B cell (primary cell): ENCODE measurements at regions of chr12 and their contacts with region 1.

Region 1: DNA sequence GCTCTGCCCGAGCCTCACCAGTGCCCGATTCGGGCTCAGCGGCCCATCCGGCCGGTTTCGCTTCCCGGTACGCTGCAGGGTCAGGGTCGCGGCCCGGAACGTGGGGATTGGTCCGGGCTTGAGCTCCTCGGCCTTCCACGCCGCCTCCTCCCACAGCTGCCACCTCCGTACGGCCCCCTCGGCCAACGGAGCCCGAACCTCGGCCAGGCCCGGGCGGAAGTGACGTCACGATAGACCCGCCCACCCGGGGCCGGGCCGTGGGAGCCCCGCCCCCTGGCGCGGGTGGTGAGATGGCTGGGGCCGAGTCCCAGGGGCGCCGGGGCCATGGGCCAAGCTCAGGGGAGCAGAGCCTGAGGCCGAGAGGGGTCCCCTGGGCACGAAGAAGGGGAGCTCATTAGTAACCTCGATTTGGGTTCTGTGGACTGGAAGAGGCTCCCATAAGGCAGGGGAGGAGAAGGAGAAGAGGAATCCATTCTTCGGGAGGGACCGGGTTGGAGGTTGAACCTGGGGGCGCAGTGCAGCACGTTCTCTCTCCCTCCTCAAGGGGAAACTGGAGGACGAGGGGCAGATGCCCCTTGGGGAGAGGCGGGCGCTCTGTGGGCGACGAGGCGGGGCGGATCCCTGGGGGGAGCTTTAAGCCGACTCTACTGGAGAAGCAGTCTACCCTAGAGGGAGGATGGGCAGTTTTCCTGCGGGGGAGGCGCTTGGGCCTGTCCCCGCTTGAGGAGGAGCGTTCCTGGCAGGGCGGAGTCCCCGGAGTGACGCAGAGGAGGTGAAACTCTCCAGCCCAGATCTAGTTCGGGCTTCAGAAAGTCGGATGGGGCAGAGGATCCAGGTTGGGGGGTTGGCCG is at the start of gene MLF2:
- DNase-seq: peak; percentile 98
- ATAC-seq: peak; percentile 87
- H3K4me3 ChIP-seq: peak within 1 kb of the TSS; percentile 75 to 93 (median 79)
- H3K4me3 Mint-ChIP-seq: peak within 1 kb of the TSS; percentile 96
- H3K27ac ChIP-seq: peak within 1 kb of the TSS; percentile 93 to 96
- H3K27ac Mint-ChIP-seq: peak within 1 kb of the TSS; percentile 99
- H3K4me1 ChIP-seq: peaks cover 13 to 14% of the 10 kb centered on the region in 2 donors
- H3K4me1 Mint-ChIP-seq: peaks cover 17% of the 10 kb centered on the region
- H3K27me3 ChIP-seq: no peaks in the 10 kb centered on the region
- H3K27me3 Mint-ChIP-seq: peaks cover 4% of the 10 kb centered on the region
- CTCF ChIP-seq: peak; percentile 89
- total RNA-seq, gene MLF2: 97.2 and 106 TPM in 2 replicates

Region 2: GRCh38 chr12:5758347-5758746 is 994.8 kb before region 1 on chr12:
- CTCF ChIA-PET with region 1: no interaction called
- POLR2A ChIA-PET with region 1: no interaction called
- intact Hi-C with region 1: no loop called
- DNase-seq: no peak
- ATAC-seq: no peak
- H3K4me3 ChIP-seq: no peak overlapping the region
- H3K4me3 Mint-ChIP-seq: no peak overlapping the region
- H3K27ac ChIP-seq: no peak overlapping the region
- H3K27ac Mint-ChIP-seq: no peak overlapping the region
- H3K4me1 ChIP-seq: no peaks in the 10 kb centered on the region
- H3K4me1 Mint-ChIP-seq: no peaks in the 10 kb centered on the region
- H3K27me3 ChIP-seq: peaks cover 0 to 6% (median 0%) of the 10 kb centered on the region in 4 experiments
- H3K27me3 Mint-ChIP-seq: peaks cover 21% of the 10 kb centered on the region
- CTCF ChIP-seq: no peak

Region 3: DNA sequence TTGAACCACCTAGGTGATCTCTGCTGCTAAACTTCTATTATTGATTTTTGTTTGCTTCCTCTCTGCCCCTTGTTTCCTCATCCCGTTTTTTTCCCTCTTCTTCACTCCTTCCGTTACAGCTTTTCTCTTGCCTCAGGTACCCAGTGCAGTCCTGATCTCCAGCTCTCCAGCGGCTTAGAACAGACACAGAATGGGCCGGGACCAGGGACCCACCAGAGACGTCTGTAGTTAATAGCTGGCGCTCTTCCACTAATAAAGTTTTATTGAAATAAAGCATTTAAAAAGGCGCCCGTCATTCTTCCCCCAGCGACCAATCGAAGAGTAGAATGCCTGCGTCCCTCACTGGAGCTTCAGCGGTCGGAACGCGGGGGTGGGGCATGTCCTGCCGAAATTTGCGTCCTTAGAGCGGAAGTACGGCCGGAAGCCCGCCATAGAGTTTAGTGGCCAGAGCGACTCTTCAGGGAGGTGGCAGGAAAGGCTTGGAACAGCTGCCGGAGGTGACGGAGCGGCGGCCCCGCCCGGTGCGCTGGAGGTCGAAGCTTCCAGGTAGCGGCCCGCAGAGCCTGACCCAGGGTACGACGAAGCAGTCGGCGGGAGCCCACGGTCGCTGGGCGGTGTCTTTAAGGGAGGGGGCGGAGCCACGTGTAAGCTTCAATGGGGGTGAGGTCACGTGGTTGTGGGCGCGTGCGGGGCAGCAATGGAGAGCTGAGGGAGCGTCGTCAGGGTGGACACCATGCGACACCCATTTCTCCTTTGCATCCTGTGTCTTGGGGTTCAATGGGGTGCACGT is 29.3 kb before region 1 on chr12 and contains the start of gene COPS7A:
- CTCF ChIA-PET with region 1: interaction called, 22 read pairs
- POLR2A ChIA-PET with region 1: interaction called, 30 read pairs
- intact Hi-C with region 1: loop called (anchors 1 kb)
- DNase-seq: peak; percentile 98
- ATAC-seq: peak; percentile 89
- H3K4me3 ChIP-seq: peak within 1 kb of the TSS; percentile 53 to 65 (median 63)
- H3K4me3 Mint-ChIP-seq: peak within 1 kb of the TSS; percentile 91
- H3K27ac ChIP-seq: peak within 1 kb of the TSS; percentile 81 to 86
- H3K27ac Mint-ChIP-seq: peak within 1 kb of the TSS; percentile 94
- H3K4me1 ChIP-seq: peaks cover 13 to 17% of the 10 kb centered on the region in 2 donors
- H3K4me1 Mint-ChIP-seq: peaks cover 19% of the 10 kb centered on the region
- H3K27me3 ChIP-seq: no peaks in the 10 kb centered on the region
- H3K27me3 Mint-ChIP-seq: no peaks in the 10 kb centered on the region
- CTCF ChIP-seq: no peak
- total RNA-seq, gene COPS7A: 28.3 and 29.4 TPM in 2 replicates

Region 4: GRCh38 chr12:6778574-6779550 is 25.7 kb after region 1 on chr12:
- CTCF ChIA-PET with region 1: interaction called, 109 read pairs
- POLR2A ChIA-PET with region 1: interaction called, 11 read pairs
- intact Hi-C with region 1: loop called (anchors 1 kb)
- DNase-seq: peak; percentile 92
- ATAC-seq: peak; percentile 98
- H3K4me3 ChIP-seq: peak overlapping the region in 4 of 5 experiments; percentile 48 to 56 (median 50)
- H3K4me3 Mint-ChIP-seq: peak overlapping the region; percentile 85
- H3K27ac ChIP-seq: no peak overlapping the region
- H3K27ac Mint-ChIP-seq: peak overlapping the region; percentile 34
- H3K4me1 ChIP-seq: peaks cover 15% of the 10 kb centered on the region in 2 donors
- H3K4me1 Mint-ChIP-seq: peaks cover 11% of the 10 kb centered on the region
- H3K27me3 ChIP-seq: peaks cover 0 to 42% (median 28%) of the 10 kb centered on the region in 4 experiments
- H3K27me3 Mint-ChIP-seq: peaks cover 42% of the 10 kb centered on the region
- CTCF ChIP-seq: peak; percentile 90

Region 5: DNA sequence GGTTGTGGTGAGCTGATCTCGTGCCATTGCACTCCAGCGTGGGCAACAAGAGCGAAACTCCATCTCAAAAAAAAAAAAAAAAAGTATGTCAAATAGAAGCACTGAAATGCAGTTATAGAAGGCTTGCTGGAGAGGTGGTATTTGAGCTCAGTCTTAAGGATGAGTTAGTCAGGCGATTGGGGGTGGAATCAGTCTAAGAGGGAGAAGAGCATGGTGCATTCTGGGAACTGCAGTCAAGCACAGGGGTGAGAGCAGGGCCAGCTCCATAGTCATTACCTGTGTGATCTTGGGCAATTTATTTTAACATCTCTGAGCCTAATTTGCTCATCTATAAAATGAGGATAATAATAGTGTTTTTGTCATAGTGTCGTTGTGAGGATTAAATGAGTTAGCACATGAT is 81.7 kb after region 1 on chr12:
- CTCF ChIA-PET with region 1: interaction called, 19 read pairs
- POLR2A ChIA-PET with region 1: interaction called, 4 read pairs
- intact Hi-C with region 1: loop called (anchors 1 kb)
- DNase-seq: no peak
- ATAC-seq: no peak
- H3K4me3 ChIP-seq: no peak overlapping the region
- H3K4me3 Mint-ChIP-seq: no peak overlapping the region
- H3K27ac ChIP-seq: no peak overlapping the region
- H3K27ac Mint-ChIP-seq: no peak overlapping the region
- H3K4me1 ChIP-seq: peaks cover 0 to 17% of the 10 kb centered on the region in 2 donors
- H3K4me1 Mint-ChIP-seq: peaks cover 12% of the 10 kb centered on the region
- H3K27me3 ChIP-seq: peaks cover 0 to 24% (median 4%) of the 10 kb centered on the region in 4 experiments
- H3K27me3 Mint-ChIP-seq: peaks cover 29% of the 10 kb centered on the region
- CTCF ChIP-seq: no peak

Region 6: DNA sequence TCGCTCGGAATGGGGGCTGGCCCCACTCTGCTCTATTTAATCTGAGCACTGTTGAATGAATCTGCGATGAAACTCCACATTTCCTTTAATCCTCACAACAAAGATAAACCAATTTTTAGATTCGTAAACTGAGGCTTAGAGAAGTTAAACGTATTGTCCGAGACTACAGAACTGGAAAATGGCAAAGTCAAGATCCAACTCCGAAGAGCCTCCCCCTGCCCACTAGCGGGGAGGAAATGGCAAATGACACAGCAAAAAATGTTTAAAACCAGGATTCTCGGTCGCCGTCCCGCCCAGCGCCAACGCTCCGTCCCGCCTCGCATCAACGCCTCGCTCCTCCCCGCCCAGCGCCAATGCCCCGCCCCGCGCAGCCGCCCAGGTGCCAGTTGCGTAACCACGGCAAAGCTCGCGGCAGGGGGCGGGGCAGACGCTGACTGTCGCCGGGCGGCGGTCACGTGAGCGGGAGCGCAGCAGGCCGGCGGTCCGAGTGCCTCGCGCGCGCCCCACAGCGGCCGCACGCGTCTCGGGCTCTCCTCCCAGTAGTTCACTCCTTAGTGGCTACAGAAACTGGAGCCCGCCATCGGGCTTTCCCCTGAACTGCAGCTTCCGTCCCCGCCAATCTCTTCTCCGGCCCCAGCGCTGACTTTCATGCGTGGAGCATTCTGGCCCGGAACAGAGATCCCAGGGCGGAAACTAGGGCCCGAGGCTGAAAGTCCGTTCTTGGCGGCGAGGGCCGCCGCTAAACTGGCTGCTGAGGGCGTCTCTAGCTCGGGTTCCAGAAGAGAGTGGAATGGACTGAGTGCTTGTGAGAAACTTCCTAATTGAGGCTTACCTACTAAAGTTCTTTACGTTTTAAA is 137.9 kb after region 1 on chr12:
- CTCF ChIA-PET with region 1: no interaction called
- POLR2A ChIA-PET with region 1: no interaction called
- intact Hi-C with region 1: loop called (anchors 1 kb)
- DNase-seq: peak; percentile 98
- ATAC-seq: peak; percentile 95
- H3K4me3 ChIP-seq: peak overlapping the region; percentile 61 to 79 (median 76)
- H3K4me3 Mint-ChIP-seq: peak overlapping the region; percentile 87
- H3K27ac ChIP-seq: peak overlapping the region; percentile 93 to 94
- H3K27ac Mint-ChIP-seq: peak overlapping the region; percentile 91
- H3K4me1 ChIP-seq: peaks cover 9 to 13% of the 10 kb centered on the region in 2 donors
- H3K4me1 Mint-ChIP-seq: peaks cover 15% of the 10 kb centered on the region
- H3K27me3 ChIP-seq: no peaks in the 10 kb centered on the region
- H3K27me3 Mint-ChIP-seq: no peaks in the 10 kb centered on the region
- CTCF ChIP-seq: peak; percentile 90